ENCODE measurements at regions of chr2 and their contacts with region 1.

Region 1: GRCh38 chr2:152925547-152926327 is 207.3 kb downstream of the ARL6IP6 start:
- DNase-seq: peak in 7 of 10 donors; percentile 33 to 89 (median 60)

Region 2: DNA sequence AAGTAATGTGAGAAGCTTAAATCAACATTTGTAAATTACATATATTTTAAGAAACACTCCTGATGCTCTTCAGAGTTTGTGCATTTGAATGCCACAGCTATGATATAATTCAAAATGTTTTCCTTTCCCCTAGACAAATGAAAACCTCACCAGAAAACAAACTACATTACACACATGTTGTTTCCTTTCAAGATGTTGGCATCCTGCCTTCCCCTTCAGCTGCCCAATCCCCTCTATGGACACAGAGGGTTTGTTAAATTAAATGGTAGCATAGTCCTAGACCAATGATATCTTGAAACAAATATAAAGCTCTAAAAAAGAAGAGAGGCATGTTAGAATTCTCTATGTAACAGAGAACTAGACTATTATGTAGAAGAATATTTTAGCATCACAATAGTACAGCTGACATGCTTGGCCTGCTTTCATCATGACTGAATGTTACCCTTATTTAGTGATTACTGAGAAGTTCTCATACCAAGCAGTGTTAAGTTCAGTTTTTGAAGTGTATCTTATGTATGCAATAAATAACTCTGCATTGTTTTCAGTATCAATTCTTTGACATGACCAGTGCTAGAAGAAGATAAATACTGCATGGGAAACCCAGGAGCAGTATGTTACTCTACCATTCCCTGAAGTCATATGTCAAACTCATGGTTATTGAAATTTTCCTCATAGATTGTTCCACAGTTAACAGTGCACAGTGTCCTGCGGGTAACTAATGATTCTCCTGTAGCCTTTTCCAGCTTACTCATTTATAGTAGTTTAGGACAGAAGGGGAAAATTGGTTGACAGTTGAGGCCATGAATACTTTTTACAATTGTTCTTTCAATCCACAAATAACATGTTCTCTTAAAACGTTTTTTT is 1456.4 kb after region 1 on chr2:
- intact Hi-C with region 1: loop called (anchors 10 kb)
- DNase-seq: no peak

Measured in posterior cingulate gyrus (tissue), 11 donors.